ENCODE measurements at regions of chr12 and their contacts with region 1.

Region 1: GRCh38 chr12:116194935-116195431 is 82.5 kb downstream of the MED13L start:
- DNase-seq: peak; percentile 39
- ATAC-seq: peak; percentile 89
- H3K4me3 Mint-ChIP-seq: peak overlapping the region; percentile 71
- H3K27ac Mint-ChIP-seq: peak overlapping the region; percentile 89
- H3K4me1 Mint-ChIP-seq: peaks cover 82% of the 10 kb centered on the region
- H3K27me3 Mint-ChIP-seq: no peaks in the 10 kb centered on the region
- CTCF ChIP-seq: no peak

Region 2: DNA sequence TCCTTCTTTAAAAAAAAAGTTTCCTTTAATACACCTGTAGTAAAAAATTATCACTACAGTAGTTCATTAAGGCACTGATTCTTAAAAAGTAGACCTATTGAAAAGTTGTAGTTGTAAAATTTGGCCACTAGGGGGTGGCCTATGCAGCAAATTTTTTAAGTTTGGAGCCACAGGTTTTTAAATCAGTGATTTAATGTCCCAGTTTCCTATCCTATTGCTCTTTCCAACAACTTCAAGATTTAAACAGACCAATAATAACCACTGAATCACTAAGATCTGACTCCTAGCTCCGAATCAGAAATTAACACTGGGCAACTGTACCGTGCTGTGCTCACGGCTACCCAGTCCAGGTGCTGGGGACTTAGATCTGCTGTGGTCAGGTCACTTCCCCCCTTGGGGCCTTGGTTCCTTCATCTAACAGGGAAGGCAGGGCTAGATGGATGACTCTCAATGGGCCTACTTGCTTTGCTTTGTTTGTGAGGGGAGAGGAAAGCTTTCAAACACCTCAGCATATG is 196.8 kb before region 1 on chr12:
- CTCF ChIA-PET with region 1: no interaction called
- POLR2A ChIA-PET with region 1: no interaction called
- intact Hi-C with region 1: loop called (anchors 1 kb)
- DNase-seq: no peak
- ATAC-seq: peak; percentile 90
- H3K4me3 Mint-ChIP-seq: no peak overlapping the region
- H3K27ac Mint-ChIP-seq: peak overlapping the region; percentile 78
- H3K4me1 Mint-ChIP-seq: peaks cover 10% of the 10 kb centered on the region
- H3K27me3 Mint-ChIP-seq: no peaks in the 10 kb centered on the region
- CTCF ChIP-seq: peak; percentile 57

Region 3: GRCh38 chr12:116066381-116067230 is 128.4 kb before region 1 on chr12:
- CTCF ChIA-PET with region 1: no interaction called
- POLR2A ChIA-PET with region 1: interaction called, 3 read pairs
- intact Hi-C with region 1: loop called (anchors 1 kb)
- DNase-seq: peak; percentile 34
- ATAC-seq: peak; percentile 71
- H3K4me3 Mint-ChIP-seq: no peak overlapping the region
- H3K27ac Mint-ChIP-seq: peak overlapping the region; percentile 60
- H3K4me1 Mint-ChIP-seq: peaks cover 44% of the 10 kb centered on the region
- H3K27me3 Mint-ChIP-seq: no peaks in the 10 kb centered on the region
- CTCF ChIP-seq: peak; percentile 96

Region 4: DNA sequence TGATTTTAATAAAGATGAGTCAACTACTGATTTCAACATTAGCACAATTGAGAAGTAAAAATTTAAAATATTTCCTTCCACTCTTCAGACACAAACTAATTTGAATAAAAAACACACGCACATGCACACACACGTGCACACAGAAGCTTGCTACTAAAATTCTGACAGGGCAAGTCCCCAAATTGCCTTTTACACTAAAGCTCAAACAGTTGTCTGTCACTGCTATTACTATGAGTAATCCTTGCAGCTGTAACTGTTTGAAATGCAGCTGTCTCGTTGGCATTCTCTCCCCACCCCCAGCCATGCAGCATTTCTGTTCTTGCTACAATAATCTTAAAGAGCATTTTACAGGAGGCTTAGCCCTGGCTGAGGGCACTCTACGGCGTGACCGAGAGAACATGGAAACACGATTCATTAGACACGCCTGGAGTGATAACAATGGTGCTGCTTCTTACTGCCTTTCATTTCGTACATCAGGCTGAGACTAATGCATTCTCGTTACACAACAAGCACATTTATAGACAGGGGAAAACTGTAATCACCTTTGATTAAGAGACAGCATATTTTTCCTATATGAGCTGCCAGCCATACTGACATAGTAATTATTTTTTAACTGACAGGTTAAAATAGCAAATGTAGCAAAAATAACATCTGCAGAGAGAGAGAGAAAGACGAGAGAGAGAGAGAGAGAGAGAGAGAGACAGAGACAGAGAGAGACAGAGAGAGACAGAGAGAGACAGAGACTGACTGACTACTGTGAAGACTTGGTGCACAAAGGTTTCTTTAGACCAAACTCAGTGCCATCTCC is 71.3 kb before region 1 on chr12:
- CTCF ChIA-PET with region 1: no interaction called
- POLR2A ChIA-PET with region 1: no interaction called
- intact Hi-C with region 1: loop called (anchors 5 kb)
- DNase-seq: peak; percentile 22
- ATAC-seq: peak; percentile 85
- H3K4me3 Mint-ChIP-seq: peak overlapping the region; percentile 55
- H3K27ac Mint-ChIP-seq: peak overlapping the region; percentile 30
- H3K4me1 Mint-ChIP-seq: peaks cover 68% of the 10 kb centered on the region
- H3K27me3 Mint-ChIP-seq: no peaks in the 10 kb centered on the region
- CTCF ChIP-seq: no peak

Region 5: DNA sequence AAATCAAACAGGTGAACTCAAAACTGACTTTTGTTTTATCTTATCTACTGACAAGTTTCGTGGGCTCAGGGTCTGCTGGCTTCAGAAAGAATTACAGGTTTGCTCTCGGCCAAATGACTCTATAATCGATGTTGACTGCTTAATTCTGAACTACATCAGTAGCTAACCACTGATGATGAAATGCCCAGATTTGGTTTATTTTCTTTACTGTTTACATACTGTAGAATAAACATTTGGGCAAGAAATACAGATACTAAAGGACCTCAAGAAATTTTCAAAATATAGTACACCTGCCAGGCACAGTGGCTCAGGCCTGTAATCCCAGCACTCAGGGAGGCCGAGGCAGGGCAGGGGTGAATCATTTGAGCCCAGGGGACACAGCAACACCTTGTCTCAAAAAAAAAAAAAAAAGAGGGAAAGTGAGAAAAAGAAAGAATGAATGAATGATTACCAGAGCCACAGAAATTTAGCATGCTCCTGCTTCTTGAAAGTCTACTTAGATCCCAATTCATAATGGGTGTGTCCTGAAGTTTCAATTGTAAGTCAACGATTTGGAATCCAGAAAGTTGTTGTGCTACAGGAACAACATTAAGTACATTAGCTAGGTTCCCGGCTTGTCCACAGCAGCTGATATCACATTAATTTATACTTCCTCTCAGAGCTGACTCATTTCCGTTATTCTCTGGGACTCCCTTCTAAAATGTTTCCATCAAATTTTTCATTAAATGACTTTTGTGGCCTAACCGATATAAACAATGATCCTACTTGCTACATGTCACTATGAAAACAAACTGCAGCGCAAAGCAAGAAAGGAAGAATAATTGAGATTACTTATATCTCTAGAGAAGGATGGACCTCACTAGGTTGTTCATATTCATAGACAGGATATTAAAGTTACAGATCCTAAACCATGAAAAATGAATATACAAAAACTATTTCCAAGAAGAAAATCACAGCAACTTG is 51.8 kb before region 1 on chr12:
- CTCF ChIA-PET with region 1: no interaction called
- POLR2A ChIA-PET with region 1: no interaction called
- intact Hi-C with region 1: loop called (anchors 2 kb)
- DNase-seq: no peak
- ATAC-seq: peak; percentile 72
- H3K4me3 Mint-ChIP-seq: peak overlapping the region; percentile 50
- H3K27ac Mint-ChIP-seq: peak overlapping the region; percentile 21
- H3K4me1 Mint-ChIP-seq: peaks cover 55% of the 10 kb centered on the region
- H3K27me3 Mint-ChIP-seq: no peaks in the 10 kb centered on the region
- CTCF ChIP-seq: no peak

Region 6: GRCh38 chr12:116172224-116172849 is 22.6 kb before region 1 on chr12:
- CTCF ChIA-PET with region 1: no interaction called
- POLR2A ChIA-PET with region 1: no interaction called
- intact Hi-C with region 1: loop called (anchors 2 kb)
- DNase-seq: no peak
- ATAC-seq: peak; percentile 92
- H3K4me3 Mint-ChIP-seq: peak overlapping the region; percentile 71
- H3K27ac Mint-ChIP-seq: peak overlapping the region; percentile 73
- H3K4me1 Mint-ChIP-seq: peaks cover 65% of the 10 kb centered on the region
- H3K27me3 Mint-ChIP-seq: no peaks in the 10 kb centered on the region
- CTCF ChIP-seq: no peak

Region 7: DNA sequence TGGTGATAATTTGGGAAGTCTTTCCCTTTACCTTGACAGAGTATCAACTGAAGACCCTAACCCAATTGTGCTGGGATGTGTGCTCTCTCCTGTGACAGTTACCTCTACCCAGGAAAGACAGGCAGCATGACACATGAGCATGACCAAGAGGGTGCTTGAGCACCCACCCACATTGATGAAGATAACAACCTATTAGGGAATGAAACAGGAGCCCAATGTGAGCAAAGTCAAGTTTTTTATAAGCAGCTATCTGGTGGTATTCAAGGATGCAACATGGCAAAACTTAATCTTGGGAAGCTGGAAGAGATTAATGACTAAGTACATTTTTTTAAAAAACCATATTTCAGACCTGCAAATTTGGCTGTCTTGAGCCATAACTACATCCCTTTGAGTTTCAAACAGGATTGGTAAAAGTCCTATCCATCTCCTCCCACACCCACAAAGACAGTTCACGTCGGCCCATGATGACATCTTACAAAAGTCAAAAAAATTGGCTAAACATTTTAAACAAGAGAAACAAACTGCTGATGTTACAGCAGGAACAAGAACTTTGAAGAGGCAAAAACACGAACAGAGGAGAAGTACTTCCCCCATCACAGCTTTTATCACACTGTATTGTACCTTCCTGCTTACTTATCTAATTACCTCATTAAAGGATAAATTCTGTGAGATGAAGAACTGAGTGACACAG is 22.2 kb after region 1 on chr12:
- CTCF ChIA-PET with region 1: no interaction called
- POLR2A ChIA-PET with region 1: no interaction called
- intact Hi-C with region 1: loop called (anchors 2 kb)
- DNase-seq: no peak
- ATAC-seq: no peak
- H3K4me3 Mint-ChIP-seq: no peak overlapping the region
- H3K27ac Mint-ChIP-seq: no peak overlapping the region
- H3K4me1 Mint-ChIP-seq: peaks cover 55% of the 10 kb centered on the region
- H3K27me3 Mint-ChIP-seq: no peaks in the 10 kb centered on the region
- CTCF ChIP-seq: no peak

Measured in activated B cell treated with CpG ODN at 0.5 μM for 24 hours (primary cell).